Activated B cell treated with CpG ODN at 0.5 μM for 24 hours (primary cell): ENCODE measurements at regions of chr10 and their contacts with region 1.

Region 1: GRCh38 chr10:25934621-25935139 is 651 bp downstream of the MYO3A start:
- DNase-seq: peak; percentile 26
- ATAC-seq: peak; percentile 85
- H3K4me3 Mint-ChIP-seq: peak overlapping the region; percentile 83
- H3K27ac Mint-ChIP-seq: no peak overlapping the region
- H3K4me1 Mint-ChIP-seq: peaks cover 10% of the 10 kb centered on the region
- H3K27me3 Mint-ChIP-seq: peaks cover 26% of the 10 kb centered on the region
- CTCF ChIP-seq: no peak

Region 2: GRCh38 chr10:25639646-25640045 is 295.0 kb before region 1 on chr10:
- CTCF ChIA-PET with region 1: no interaction called
- POLR2A ChIA-PET with region 1: no interaction called
- intact Hi-C with region 1: no loop called
- DNase-seq: no peak
- ATAC-seq: no peak
- H3K4me3 Mint-ChIP-seq: no peak overlapping the region
- H3K27ac Mint-ChIP-seq: no peak overlapping the region
- H3K4me1 Mint-ChIP-seq: peaks cover 8% of the 10 kb centered on the region
- H3K27me3 Mint-ChIP-seq: no peaks in the 10 kb centered on the region
- CTCF ChIP-seq: no peak

Region 3: GRCh38 chr10:25738776-25739175 is 195.9 kb before region 1 on chr10:
- CTCF ChIA-PET with region 1: no interaction called
- POLR2A ChIA-PET with region 1: no interaction called
- intact Hi-C with region 1: no loop called
- DNase-seq: no peak
- ATAC-seq: no peak
- H3K4me3 Mint-ChIP-seq: no peak overlapping the region
- H3K27ac Mint-ChIP-seq: no peak overlapping the region
- H3K4me1 Mint-ChIP-seq: no peaks in the 10 kb centered on the region
- H3K27me3 Mint-ChIP-seq: peaks cover 13% of the 10 kb centered on the region
- CTCF ChIP-seq: no peak

Region 4: DNA sequence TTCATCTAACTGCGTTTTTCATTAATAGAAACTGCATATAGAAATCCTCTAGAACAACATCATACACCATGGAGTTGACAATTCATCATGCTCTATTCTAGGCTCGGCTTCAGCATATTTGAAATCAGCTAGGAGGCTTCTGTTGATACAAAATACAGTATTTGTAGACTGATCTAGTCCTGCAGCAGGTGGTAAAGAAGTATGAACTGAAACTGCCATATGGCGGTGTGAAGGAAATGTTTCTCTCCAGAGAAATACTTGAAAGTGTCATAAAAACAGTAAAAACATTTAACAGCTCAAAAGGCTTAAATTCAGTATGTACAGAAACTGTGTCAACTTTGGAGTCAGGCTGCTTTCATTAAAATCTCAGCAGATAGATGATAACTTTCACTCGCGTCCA is 32.7 kb before region 1 on chr10:
- CTCF ChIA-PET with region 1: interaction called, 3 read pairs
- POLR2A ChIA-PET with region 1: no interaction called
- intact Hi-C with region 1: loop called (anchors 1 kb)
- DNase-seq: no peak
- ATAC-seq: peak; percentile 66
- H3K4me3 Mint-ChIP-seq: peak overlapping the region; percentile 63
- H3K27ac Mint-ChIP-seq: peak overlapping the region; percentile 83
- H3K4me1 Mint-ChIP-seq: peaks cover 46% of the 10 kb centered on the region
- H3K27me3 Mint-ChIP-seq: peaks cover 6% of the 10 kb centered on the region
- CTCF ChIP-seq: no peak